Mammary epithelial cell (primary cell): ENCODE measurements at regions of chr1 and their contacts with region 1.

Region 1: GRCh38 chr1:65067491-65068201 is 80.4 kb upstream of the AK4 start:
- DNase-seq: peak; percentile 71
- H3K4me3 ChIP-seq: peak overlapping the region; percentile 65 to 80 (median 75)
- H3K27ac ChIP-seq: peak overlapping the region; percentile 18
- H3K4me1 ChIP-seq: peaks cover 14% of the 10 kb centered on the region
- H3K27me3 ChIP-seq: no peaks in the 10 kb centered on the region
- CTCF ChIP-seq: no peak

Region 2: GRCh38 chr1:64834734-64835133 is 232.9 kb before region 1 on chr1:
- CTCF ChIA-PET with region 1: no interaction called
- dilution Hi-C with region 1: no loop called
- in situ Hi-C with region 1: no loop called
- intact Hi-C with region 1: no loop called
- DNase-seq: peak; percentile 70
- H3K4me3 ChIP-seq: no peak overlapping the region
- H3K27ac ChIP-seq: no peak overlapping the region
- H3K4me1 ChIP-seq: peaks cover 5% of the 10 kb centered on the region
- H3K27me3 ChIP-seq: no peaks in the 10 kb centered on the region
- CTCF ChIP-seq: no peak

Region 3: GRCh38 chr1:64898107-64898845 is 169.4 kb before region 1 on chr1:
- CTCF ChIA-PET with region 1: no interaction called
- dilution Hi-C with region 1: no loop called
- in situ Hi-C with region 1: no loop called
- intact Hi-C with region 1: no loop called
- DNase-seq: peak; percentile 91
- H3K4me3 ChIP-seq: no peak overlapping the region
- H3K27ac ChIP-seq: peak overlapping the region; percentile 78
- H3K4me1 ChIP-seq: peaks cover 38% of the 10 kb centered on the region
- H3K27me3 ChIP-seq: no peaks in the 10 kb centered on the region
- CTCF ChIP-seq: no peak

Region 4: DNA sequence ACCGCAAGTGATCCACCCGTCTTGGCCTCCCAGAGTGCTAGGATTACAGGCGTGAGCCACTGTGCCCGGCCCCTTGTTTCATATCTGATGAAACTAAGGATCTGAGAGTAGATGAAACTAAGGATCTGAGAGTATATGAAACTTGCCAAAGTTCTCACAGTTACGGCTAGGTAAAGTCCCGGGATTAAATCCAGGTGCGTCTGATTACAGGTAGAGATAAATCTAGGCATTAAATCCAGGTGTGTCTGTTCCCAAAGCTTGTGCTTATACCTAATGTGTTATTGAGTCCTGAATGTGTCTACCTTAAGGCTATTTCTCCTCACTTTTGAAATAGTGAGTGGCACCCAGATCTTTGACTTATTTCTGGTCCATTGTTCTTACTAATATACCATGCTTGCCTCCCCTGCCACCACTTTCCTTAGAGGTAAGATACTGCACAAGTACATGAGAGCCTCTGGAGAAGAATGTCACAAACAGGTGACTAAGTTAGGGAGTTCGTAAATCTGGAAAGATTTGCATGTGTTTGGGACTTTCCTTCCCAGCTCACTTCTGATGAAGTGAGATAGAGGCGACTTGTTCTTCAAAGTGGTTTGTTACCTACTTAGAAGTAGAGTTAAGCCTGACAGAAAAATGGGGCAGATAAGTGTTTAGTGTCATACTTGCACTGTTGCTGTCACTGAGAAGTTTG is 146.8 kb after region 1 on chr1:
- CTCF ChIA-PET with region 1: interaction called, 12 read pairs
- dilution Hi-C with region 1: no loop called
- in situ Hi-C with region 1: loop called (anchors 5 kb)
- intact Hi-C with region 1: no loop called
- DNase-seq: no peak
- H3K4me3 ChIP-seq: no peak overlapping the region
- H3K27ac ChIP-seq: no peak overlapping the region
- H3K4me1 ChIP-seq: peaks cover 4% of the 10 kb centered on the region
- H3K27me3 ChIP-seq: no peaks in the 10 kb centered on the region
- CTCF ChIP-seq: no peak